A673 (cell line): ENCODE measurements at regions of chr11 and their contacts with region 1.

Region 1: GRCh38 chr11:61871158-61871597 is 20.2 kb downstream of the FADS3 start:
- DNase-seq: peak; percentile 93
- H3K4me3 ChIP-seq: peak overlapping the region; percentile 10
- H3K27ac ChIP-seq: peak overlapping the region; percentile 70
- H3K4me1 ChIP-seq: peaks cover 20% of the 10 kb centered on the region
- H3K27me3 ChIP-seq: no peaks in the 10 kb centered on the region
- CTCF ChIP-seq: peak; percentile 100

Region 2: GRCh38 chr11:61797263-61797944 is 73.8 kb before region 1 on chr11:
- CTCF ChIA-PET with region 1: interaction called, 6 read pairs
- POLR2A ChIA-PET with region 1: no interaction called
- intact Hi-C with region 1: loop called (anchors 5 kb)
- DNase-seq: peak; percentile 88
- H3K4me3 ChIP-seq: no peak overlapping the region
- H3K27ac ChIP-seq: peak overlapping the region; percentile 62
- H3K4me1 ChIP-seq: peaks cover 14% of the 10 kb centered on the region
- H3K27me3 ChIP-seq: no peaks in the 10 kb centered on the region
- CTCF ChIP-seq: peak; percentile 96

Region 3: DNA sequence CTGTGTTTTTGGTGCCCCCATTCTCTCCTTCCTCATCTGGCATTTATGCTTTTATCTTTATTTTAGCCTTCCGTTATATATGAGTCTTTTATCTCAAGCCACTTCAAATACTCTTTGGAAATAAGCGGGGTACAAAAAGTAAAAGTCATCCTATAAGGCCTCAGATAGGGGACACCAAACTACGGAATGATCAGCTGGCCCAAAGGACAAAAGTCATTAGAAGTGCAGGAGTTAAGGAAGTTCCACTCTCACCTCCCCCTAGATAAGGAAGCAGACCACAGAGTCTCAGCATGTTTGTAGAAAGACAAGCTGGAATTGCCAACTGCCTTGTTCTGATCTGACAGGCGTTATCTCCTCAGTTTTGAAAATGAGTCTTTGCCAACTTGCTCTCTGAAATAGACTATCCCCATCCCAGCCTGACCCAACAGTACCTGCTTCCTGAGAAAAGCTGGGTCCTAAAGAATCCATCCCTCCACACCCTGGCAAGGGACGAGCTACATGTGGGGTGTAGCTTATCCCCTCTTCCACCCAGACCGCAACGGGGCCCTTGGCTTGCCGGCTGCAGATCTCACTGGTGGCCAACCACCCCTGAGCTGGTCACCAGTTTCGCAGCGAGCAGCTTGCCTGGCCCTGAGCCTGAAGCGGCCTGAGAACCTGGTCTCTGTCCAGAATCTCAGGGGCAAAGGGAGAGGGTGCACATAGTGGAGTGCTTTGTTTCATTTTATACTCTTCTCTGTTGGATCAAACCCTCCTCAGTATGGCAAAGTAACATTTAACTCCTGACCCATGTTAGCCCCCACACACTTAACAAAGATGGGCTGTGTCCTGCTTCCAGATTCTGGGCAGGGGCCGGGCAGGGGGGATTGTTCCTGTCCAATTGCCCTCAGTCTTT is 29.3 kb before region 1 on chr11:
- CTCF ChIA-PET with region 1: no interaction called
- POLR2A ChIA-PET with region 1: interaction called, 11 read pairs
- intact Hi-C with region 1: no loop called
- DNase-seq: no peak
- H3K4me3 ChIP-seq: no peak overlapping the region
- H3K27ac ChIP-seq: peak overlapping the region; percentile 57
- H3K4me1 ChIP-seq: peaks cover 9% of the 10 kb centered on the region
- H3K27me3 ChIP-seq: no peaks in the 10 kb centered on the region
- CTCF ChIP-seq: no peak

Region 4: GRCh38 chr11:62081378-62082291 is 210.5 kb after region 1 on chr11:
- CTCF ChIA-PET with region 1: interaction called, 14 read pairs
- POLR2A ChIA-PET with region 1: no interaction called
- intact Hi-C with region 1: loop called (anchors 1 kb)
- DNase-seq: peak; percentile 74
- H3K4me3 ChIP-seq: no peak overlapping the region
- H3K27ac ChIP-seq: no peak overlapping the region
- H3K4me1 ChIP-seq: peaks cover 6% of the 10 kb centered on the region
- H3K27me3 ChIP-seq: no peaks in the 10 kb centered on the region
- CTCF ChIP-seq: peak; percentile 97

Region 5: DNA sequence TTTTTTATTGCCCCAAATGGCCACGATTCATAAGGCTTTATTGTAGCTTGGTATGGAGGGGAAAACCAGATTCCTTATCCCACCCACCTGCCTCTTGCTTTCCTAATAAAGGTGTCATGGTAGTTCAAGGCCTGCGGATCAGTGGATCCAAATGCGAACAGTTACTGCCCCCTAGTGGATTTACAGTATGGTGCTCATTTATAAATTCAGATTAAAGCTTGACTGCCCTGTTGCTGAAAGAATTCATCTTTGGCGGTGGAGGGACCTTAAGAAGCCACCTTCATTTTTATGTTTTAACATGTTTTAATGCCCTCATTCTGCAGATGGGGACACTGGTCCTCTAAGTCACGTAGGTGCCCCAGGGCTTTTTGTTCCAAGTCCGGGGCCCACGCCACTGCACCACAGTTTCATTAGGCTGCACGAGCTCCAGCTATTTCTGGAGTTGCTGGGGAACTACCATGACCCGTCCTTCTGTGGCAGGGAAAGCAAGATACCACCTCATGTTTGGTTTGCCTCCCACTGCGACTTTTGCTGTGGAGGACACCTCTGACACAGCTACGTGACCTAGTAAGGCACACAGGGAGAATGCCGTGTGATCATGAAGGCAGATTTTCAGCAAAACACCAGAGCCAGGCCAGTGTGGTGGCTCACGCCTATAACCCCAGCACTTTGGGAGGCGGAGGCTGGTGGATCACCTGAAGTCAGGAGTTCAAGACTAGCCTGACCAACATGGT is 237.0 kb after region 1 on chr11:
- CTCF ChIA-PET with region 1: interaction called, 43 read pairs
- POLR2A ChIA-PET with region 1: interaction called, 6 read pairs
- intact Hi-C with region 1: loop called (anchors 1 kb)
- DNase-seq: peak; percentile 84
- H3K4me3 ChIP-seq: no peak overlapping the region
- H3K27ac ChIP-seq: no peak overlapping the region
- H3K4me1 ChIP-seq: peaks cover 3% of the 10 kb centered on the region
- H3K27me3 ChIP-seq: no peaks in the 10 kb centered on the region
- CTCF ChIP-seq: peak; percentile 91

Region 6: DNA sequence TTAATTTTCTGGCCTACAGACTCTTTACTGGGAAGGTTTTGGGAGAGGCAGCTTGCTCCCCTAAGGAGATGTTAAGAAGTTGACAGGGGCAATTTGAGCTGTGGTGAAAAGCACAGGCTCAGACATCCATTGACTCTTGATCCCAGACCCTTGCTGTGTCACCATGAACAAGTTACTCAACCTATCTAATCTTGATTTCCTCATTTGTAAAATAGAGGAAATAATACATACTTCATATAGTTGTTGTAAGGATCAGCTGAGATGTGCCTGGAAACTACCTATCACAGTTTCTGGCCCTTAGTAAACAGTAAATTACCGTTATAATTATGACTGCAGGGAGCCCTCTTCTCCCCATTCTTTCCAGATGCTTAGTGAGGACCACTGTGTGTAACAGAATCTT is 444.3 kb after region 1 on chr11:
- CTCF ChIA-PET with region 1: no interaction called
- POLR2A ChIA-PET with region 1: no interaction called
- intact Hi-C with region 1: loop called (anchors 10 kb)
- DNase-seq: no peak
- H3K4me3 ChIP-seq: no peak overlapping the region
- H3K27ac ChIP-seq: no peak overlapping the region
- H3K4me1 ChIP-seq: no peaks in the 10 kb centered on the region
- H3K27me3 ChIP-seq: peaks cover 20% of the 10 kb centered on the region
- CTCF ChIP-seq: no peak

Region 7: DNA sequence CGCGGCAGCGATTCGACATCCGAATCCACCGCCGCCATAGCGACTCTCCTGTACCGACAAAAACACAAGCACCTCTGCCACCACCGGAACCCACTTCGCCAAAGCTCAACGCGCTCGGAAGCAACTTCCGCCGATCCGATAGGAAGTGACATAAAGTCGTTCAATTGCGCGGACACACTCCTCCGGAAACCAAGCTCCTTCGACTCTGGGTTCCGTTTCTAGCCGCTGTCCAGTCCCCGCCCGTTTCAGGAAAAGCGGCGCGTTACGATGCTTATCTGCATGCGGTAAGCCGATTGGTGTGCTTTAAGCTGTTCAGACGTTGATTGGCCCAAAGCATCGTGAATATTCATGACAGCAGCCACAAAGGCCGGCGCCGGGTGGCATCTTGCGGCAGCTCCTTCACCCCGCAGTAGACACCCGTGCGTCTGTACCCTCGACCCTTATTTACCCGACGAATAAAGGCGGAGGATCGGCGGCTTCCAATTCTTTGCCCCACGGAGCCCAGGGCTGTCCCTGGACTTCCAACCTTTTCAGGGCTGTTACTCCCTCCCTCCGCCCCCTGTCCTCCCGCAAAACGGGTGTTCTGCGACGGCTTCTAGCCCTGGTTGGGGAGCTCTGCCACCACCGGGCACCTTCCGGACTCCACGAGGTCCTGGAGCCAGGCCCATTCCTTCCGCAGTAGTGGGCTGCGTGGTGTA is 720.4 kb after region 1 on chr11 and contains the start of gene TUT1:
- CTCF ChIA-PET with region 1: no interaction called
- POLR2A ChIA-PET with region 1: interaction called, 13 read pairs
- intact Hi-C with region 1: no loop called
- DNase-seq: peak; percentile 100
- H3K4me3 ChIP-seq: peak within 1 kb of the TSS; percentile 67
- H3K27ac ChIP-seq: peak within 1 kb of the TSS; percentile 80
- H3K4me1 ChIP-seq: peaks cover 17% of the 10 kb centered on the region
- H3K27me3 ChIP-seq: no peaks in the 10 kb centered on the region
- CTCF ChIP-seq: no peak
- total RNA-seq, gene TUT1: 27.3 and 27.6 TPM in 2 replicates